Calu3 (cell line): ENCODE measurements at regions of chr16 and their contacts with region 1.

Region 1: GRCh38 chr16:52456368-52456767 is 90.6 kb downstream of the TOX3 start:
- DNase-seq: peak; percentile 87
- H3K4me3 Mint-ChIP-seq: peak overlapping the region; percentile 44
- H3K27ac Mint-ChIP-seq: peak overlapping the region; percentile 64
- H3K4me1 Mint-ChIP-seq: peaks cover 74% of the 10 kb centered on the region
- H3K27me3 Mint-ChIP-seq: no peaks in the 10 kb centered on the region
- CTCF ChIP-seq: no peak

Region 2: DNA sequence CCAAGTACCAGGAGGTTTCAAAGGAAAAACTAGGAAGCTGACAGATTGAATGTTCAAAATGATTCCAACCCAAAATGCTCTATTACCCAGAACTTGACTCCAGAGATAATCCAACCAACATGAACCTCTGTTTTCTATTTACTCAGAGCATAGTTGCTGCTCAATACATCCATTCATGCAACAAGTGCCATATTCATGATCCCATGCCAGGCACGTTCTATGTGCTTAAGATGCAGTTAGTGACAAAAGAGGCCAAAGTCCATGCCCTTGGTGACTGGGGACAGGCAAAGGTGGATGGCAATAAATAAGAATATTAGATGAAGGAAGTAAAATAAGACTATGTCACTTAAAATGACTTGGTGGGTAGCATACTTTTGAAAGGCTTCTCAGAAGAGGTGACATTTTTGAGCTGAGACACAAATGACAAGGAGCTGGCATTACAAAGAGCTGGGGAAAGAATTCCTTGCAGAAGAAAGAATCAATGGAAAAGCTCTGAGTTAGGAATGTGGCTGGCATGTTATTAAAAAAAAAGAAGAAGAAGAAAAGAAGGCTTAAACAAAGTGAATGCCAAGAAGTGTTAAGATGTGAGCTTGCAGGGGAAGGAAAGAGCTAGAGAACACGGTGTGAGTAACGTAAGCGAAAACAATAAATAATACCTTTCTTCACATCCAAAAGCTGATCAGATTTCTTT is 56.1 kb after region 1 on chr16:
- CTCF ChIA-PET with region 1: no interaction called
- intact Hi-C with region 1: no loop called
- DNase-seq: no peak
- H3K4me3 Mint-ChIP-seq: no peak overlapping the region
- H3K27ac Mint-ChIP-seq: no peak overlapping the region
- H3K4me1 Mint-ChIP-seq: peaks cover 8% of the 10 kb centered on the region
- H3K27me3 Mint-ChIP-seq: no peaks in the 10 kb centered on the region
- CTCF ChIP-seq: no peak

Region 3: DNA sequence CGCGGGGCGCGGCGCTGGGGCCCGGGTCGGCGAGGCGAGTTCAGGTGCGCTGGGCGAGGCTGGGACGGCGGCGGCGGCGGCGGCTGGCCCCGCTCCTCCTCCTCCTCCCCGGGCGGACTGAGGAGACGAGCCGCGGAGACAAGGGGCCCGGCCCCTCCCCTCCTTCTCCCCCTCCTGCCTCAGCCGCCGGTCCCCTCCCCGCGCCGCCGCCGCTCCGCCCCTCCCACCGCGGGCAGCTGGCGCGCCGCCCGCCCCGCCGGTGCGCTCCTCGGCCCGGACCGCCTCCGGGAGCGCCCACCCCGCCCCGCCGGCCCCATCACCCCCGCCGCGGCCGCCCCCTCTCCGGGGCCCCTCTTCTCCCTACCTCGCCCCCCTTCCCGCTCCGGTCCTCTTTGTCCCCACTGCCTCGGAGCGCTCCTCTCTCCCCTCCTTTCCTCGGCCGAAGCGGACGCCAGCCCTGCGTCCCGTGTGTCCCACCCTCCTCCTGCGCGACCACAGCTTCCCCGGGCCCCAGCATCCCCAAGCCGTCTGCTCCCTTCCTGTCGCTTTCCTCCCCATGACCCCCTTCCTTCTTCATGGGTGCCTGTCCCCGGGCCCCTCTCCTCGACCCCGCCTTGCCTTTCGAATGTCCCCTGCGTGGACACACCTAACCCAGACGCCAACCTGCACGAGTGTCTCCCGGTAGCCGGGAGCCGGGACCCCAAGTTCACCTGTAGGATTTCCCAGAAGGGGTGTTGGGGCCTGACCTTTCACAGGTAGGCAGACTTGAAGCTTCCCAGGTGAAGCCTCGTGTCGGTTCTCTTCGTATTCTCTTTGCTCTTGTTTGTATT is 90.9 kb after region 1 on chr16 and contains the start of gene TOX3:
- CTCF ChIA-PET with region 1: no interaction called
- intact Hi-C with region 1: loop called (anchors 5 kb)
- DNase-seq: peak; percentile 77
- H3K4me3 Mint-ChIP-seq: peak within 1 kb of the TSS; percentile 78
- H3K27ac Mint-ChIP-seq: peak within 1 kb of the TSS; percentile 69
- H3K4me1 Mint-ChIP-seq: peaks cover 32% of the 10 kb centered on the region
- H3K27me3 Mint-ChIP-seq: no peaks in the 10 kb centered on the region
- CTCF ChIP-seq: no peak
- total RNA-seq, gene TOX3: 27.4 and 29.4 TPM in 2 replicates